Activated T-helper 1 cell treated with anti-CD3 and anti-CD28 coated beads, Interleukin-12 subunit alpha, Interleukin-12 subunit beta, Interleukin-2, Interleukin-4 antibody, amounts not matched to agents 30 ng/mL and 10 ng/mL and 1 ng/mL, durations not matched to agents 14 hours and 24 hours and 36 hours (primary cell): ENCODE measurements at regions of chr22 and their contacts with region 1.

Region 1: GRCh38 chr22:40400159-40400558 is 29.8 kb downstream of the SGSM3 start:
- DNase-seq: peak; percentile 43
- H3K4me3 Mint-ChIP-seq: peak overlapping the region; percentile 54
- H3K27ac Mint-ChIP-seq: peak overlapping the region; percentile 71
- H3K4me1 Mint-ChIP-seq: peaks cover 36% of the 10 kb centered on the region
- H3K27me3 Mint-ChIP-seq: no peaks in the 10 kb centered on the region

Region 2: GRCh38 chr22:40368016-40368415 is 32.1 kb before region 1 on chr22:
- intact Hi-C with region 1: loop called (anchors 2 kb)
- DNase-seq: no peak
- H3K4me3 Mint-ChIP-seq: no peak overlapping the region
- H3K27ac Mint-ChIP-seq: no peak overlapping the region
- H3K4me1 Mint-ChIP-seq: peaks cover 16% of the 10 kb centered on the region
- H3K27me3 Mint-ChIP-seq: no peaks in the 10 kb centered on the region

Region 3: DNA sequence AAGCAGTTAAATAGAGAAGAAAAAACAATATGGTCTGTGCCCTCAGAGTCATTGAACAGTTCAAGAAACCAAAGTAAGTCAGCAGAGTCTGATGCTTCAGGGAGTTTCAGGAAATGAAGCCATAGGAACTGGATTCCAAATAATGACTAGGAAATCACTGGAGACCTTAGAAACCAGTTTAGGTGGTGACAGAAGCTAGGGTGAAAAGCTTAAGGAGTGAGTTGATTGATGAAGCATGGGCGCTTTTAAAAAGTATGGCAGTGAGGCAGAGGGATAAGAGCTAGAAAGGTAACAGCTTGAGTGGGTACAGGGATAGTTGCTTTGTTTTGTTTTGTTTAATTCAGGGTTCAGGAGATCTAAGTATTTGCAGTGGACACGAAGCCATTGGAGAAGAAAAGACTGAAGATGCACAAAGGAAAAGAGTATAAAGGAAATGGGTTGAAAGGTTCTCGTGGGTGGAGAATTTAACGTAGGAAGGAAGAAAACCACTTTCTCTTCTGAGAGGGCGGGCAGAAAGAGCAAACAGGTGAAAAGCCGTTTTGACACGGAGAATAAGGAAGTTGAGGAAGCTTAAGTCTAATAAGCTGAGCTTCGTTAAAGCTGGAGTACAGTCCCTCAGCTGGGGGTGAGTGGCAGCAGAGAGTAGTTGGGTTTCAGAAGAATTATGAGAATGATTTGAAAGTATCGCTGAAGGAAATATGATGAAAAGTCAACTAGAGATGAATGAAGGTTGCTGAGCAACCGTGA is 14.9 kb before region 1 on chr22:
- intact Hi-C with region 1: loop called (anchors 2 kb)
- DNase-seq: peak; percentile 17
- H3K4me3 Mint-ChIP-seq: peak overlapping the region; percentile 72
- H3K27ac Mint-ChIP-seq: peak overlapping the region; percentile 91
- H3K4me1 Mint-ChIP-seq: peaks cover 40% of the 10 kb centered on the region
- H3K27me3 Mint-ChIP-seq: no peaks in the 10 kb centered on the region

Region 4: GRCh38 chr22:40418366-40419201 is 18.4 kb after region 1 on chr22:
- intact Hi-C with region 1: no loop called
- DNase-seq: no peak
- H3K4me3 Mint-ChIP-seq: no peak overlapping the region
- H3K27ac Mint-ChIP-seq: no peak overlapping the region
- H3K4me1 Mint-ChIP-seq: peaks cover 13% of the 10 kb centered on the region
- H3K27me3 Mint-ChIP-seq: no peaks in the 10 kb centered on the region

Region 5: GRCh38 chr22:40990430-40990829 is 590.3 kb after region 1 on chr22:
- intact Hi-C with region 1: no loop called
- DNase-seq: no peak
- H3K4me3 Mint-ChIP-seq: no peak overlapping the region
- H3K27ac Mint-ChIP-seq: no peak overlapping the region
- H3K4me1 Mint-ChIP-seq: no peaks in the 10 kb centered on the region
- H3K27me3 Mint-ChIP-seq: peaks cover 8% of the 10 kb centered on the region